ENCODE measurements at regions of chr4 and their contacts with region 1.

Region 1: DNA sequence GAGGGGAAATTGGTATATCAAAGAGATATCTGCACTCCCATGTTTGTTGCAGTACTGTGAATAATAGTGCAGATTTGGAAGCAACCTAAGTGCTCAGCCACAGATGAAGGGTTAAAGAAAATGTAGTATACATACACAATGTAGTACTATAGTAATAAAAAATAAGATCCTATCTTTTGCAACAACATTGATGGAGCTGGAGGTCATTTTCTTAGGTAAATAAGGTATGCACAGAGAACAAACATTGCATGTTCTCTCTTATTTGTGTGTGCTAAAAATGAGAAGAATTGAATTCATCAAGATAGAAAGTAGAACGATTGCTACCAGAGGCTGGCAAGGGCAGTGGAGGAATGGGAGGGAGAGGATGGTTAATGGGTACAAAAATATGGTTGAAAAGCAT is 117.9 kb upstream of the TRAM1L1 start:
- DNase-seq: no peak
- ATAC-seq: no peak
- H3K4me3 ChIP-seq: no peak overlapping the region
- H3K4me3 Mint-ChIP-seq: no peak overlapping the region
- H3K27ac ChIP-seq: no peak overlapping the region
- H3K27ac Mint-ChIP-seq: no peak overlapping the region
- H3K4me1 ChIP-seq: no peaks in the 10 kb centered on the region
- H3K4me1 Mint-ChIP-seq: no peaks in the 10 kb centered on the region
- H3K27me3 ChIP-seq: no peaks in the 10 kb centered on the region
- H3K27me3 Mint-ChIP-seq: no peaks in the 10 kb centered on the region
- CTCF ChIP-seq: no peak

Region 2: GRCh38 chr4:117224256-117224655 is 21.0 kb after region 1 on chr4:
- CTCF ChIA-PET with region 1: interaction called, 13 read pairs
- POLR2A ChIA-PET with region 1: no interaction called
- intact Hi-C with region 1: no loop called
- DNase-seq: no peak
- ATAC-seq: no peak
- H3K4me3 ChIP-seq: no peak overlapping the region
- H3K4me3 Mint-ChIP-seq: no peak overlapping the region
- H3K27ac ChIP-seq: no peak overlapping the region
- H3K27ac Mint-ChIP-seq: no peak overlapping the region
- H3K4me1 ChIP-seq: no peaks in the 10 kb centered on the region
- H3K4me1 Mint-ChIP-seq: no peaks in the 10 kb centered on the region
- H3K27me3 ChIP-seq: no peaks in the 10 kb centered on the region
- H3K27me3 Mint-ChIP-seq: no peaks in the 10 kb centered on the region
- CTCF ChIP-seq: no peak

Region 3: DNA sequence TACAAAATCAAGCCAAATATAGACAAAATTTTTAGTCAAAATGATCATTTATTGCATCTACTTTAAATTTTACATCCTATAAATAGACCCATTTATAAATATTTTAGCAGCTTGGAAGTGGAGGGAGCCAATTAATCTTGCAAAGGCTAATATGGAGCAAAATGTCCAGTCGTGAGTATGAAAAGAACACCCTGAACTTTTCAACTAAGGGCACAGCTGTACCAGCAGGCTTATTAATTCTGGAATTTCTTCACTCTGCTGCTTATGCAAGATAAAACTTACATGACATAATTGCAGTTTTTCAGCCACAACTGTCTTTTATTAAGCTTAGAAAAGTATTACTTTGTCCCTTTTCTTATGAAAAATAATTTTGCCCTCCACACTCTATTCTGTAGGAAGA is 1986.4 kb after region 1 on chr4:
- CTCF ChIA-PET with region 1: no interaction called
- POLR2A ChIA-PET with region 1: no interaction called
- intact Hi-C with region 1: no loop called
- DNase-seq: no peak
- ATAC-seq: no peak
- H3K4me3 ChIP-seq: no peak overlapping the region
- H3K4me3 Mint-ChIP-seq: no peak overlapping the region
- H3K27ac ChIP-seq: no peak overlapping the region
- H3K27ac Mint-ChIP-seq: no peak overlapping the region
- H3K4me1 ChIP-seq: no peaks in the 10 kb centered on the region
- H3K4me1 Mint-ChIP-seq: no peaks in the 10 kb centered on the region
- H3K27me3 ChIP-seq: no peaks in the 10 kb centered on the region
- H3K27me3 Mint-ChIP-seq: no peaks in the 10 kb centered on the region
- CTCF ChIP-seq: no peak

Measured in B cell (primary cell).